CD14-positive monocyte (primary cell): ENCODE measurements at regions of chr1 and their contacts with region 1.

Region 1: DNA sequence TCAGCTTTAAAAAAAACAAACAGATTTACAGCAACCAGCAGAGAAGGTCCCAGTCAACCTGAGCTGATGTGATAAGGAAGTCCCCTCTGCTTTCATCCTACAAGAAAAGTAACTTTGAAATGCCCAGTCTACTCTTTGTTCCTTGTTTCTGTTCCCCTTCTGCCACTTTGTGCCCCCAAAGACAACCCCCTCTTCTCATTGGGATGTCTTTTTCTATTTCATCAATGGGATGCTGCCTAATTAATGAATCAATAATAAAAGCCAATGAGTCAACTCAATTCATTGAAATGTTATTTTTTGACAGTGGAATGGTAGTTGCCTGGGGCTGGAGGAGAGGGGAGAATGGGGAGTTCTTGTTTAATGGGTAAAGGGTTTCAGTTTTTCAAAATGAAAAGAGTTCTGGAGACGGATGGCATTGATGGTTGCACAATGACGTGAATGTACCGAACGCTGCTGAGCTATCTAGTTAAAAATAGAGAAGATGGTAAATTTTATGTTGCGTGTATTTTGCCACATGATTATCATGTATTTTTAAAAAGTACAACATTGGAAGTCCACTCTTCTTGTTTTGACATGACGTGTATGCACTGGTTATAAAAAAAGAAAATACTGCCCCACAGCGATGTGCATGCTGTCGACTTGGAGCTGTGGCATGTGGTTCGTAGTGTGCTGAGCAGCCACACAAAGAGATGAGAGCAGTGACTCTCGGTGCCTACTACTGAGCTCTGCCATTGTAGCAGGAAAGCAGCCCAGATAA is 22.4 kb upstream of the PADI2 start:
- DNase-seq: peak; percentile 69 to 93 (median 76)
- H3K4me3 ChIP-seq: peak overlapping the region in 1 of 3 experiments; percentile 45
- H3K4me3 Mint-ChIP-seq: peak overlapping the region; percentile 54 to 80
- H3K27ac ChIP-seq: peak overlapping the region; percentile 84 to 89
- H3K27ac Mint-ChIP-seq: peak overlapping the region; percentile 94 to 98 (median 96)
- H3K4me1 ChIP-seq: peaks cover 27 to 30% of the 10 kb centered on the region in 2 donors
- H3K4me1 Mint-ChIP-seq: peaks cover 34% of the 10 kb centered on the region
- H3K27me3 ChIP-seq: no peaks in the 10 kb centered on the region
- H3K27me3 Mint-ChIP-seq: peaks cover 0 to 1% (median 1%) of the 10 kb centered on the region in 3 donors
- CTCF ChIP-seq: no peak

Region 2: GRCh38 chr1:17080880-17081279 is 60.7 kb before region 1 on chr1:
- intact Hi-C with region 1: no loop called
- DNase-seq: no peak
- H3K4me3 ChIP-seq: no peak overlapping the region
- H3K4me3 Mint-ChIP-seq: no peak overlapping the region
- H3K27ac ChIP-seq: peak overlapping the region in 1 of 2 donors; percentile 69
- H3K27ac Mint-ChIP-seq: peak overlapping the region in 3 of 7 donors; percentile 63 to 90 (median 85)
- H3K4me1 ChIP-seq: peaks cover 26 to 29% of the 10 kb centered on the region in 2 donors
- H3K4me1 Mint-ChIP-seq: peaks cover 60% of the 10 kb centered on the region
- H3K27me3 ChIP-seq: no peaks in the 10 kb centered on the region
- H3K27me3 Mint-ChIP-seq: peaks cover 0 to 6% (median 1%) of the 10 kb centered on the region in 3 donors
- CTCF ChIP-seq: no peak

Region 3: DNA sequence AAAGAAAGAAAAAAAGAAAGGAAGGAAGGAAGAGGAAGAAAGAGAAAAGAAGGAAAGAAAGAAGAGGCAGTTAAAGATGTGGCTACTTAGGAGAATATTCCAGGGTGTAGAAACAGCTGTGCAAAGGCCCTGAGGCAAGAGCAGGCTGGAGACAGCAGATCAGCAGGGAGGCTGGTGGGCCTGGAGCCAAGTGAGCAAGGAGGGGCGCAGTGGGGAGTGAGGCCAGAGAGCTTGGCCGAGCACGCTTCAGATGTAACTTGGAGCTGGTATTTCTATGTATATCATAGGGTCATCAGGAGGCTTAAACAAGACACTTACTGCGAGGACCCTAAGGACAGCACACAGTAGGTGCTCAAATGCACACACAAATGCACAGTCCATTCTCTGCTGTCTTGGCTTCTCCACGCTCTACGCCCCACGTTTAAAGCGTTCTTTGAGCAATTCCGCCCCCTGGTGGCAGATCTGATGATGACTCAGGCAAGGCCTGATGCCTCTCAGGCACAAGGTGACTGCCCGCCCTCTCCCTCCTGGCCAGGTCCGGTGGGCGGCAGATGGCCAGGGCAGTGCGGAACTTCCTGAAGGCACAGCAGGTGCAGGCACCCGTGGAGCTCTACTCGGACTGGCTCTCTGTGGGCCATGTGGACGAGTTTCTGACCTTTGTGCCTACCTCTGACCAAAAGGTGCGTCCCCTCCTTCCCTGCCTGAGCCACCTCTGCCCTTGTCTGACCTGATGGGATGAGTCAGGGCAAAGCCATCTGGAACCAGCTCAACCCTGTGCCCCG is 95.4 kb after region 1 on chr1:
- intact Hi-C with region 1: loop called in 1 of 2 experiments (anchors 5 kb)
- DNase-seq: peak; percentile 81 to 86 (median 85)
- H3K4me3 ChIP-seq: no peak overlapping the region
- H3K4me3 Mint-ChIP-seq: no peak overlapping the region
- H3K27ac ChIP-seq: no peak overlapping the region
- H3K27ac Mint-ChIP-seq: peak overlapping the region in 3 of 7 donors; percentile 41 to 63 (median 55)
- H3K4me1 ChIP-seq: peaks cover 12% of the 10 kb centered on the region in 2 donors
- H3K4me1 Mint-ChIP-seq: peaks cover 22% of the 10 kb centered on the region
- H3K27me3 ChIP-seq: no peaks in the 10 kb centered on the region
- H3K27me3 Mint-ChIP-seq: peaks cover 0 to 5% (median 5%) of the 10 kb centered on the region in 3 donors
- CTCF ChIP-seq: peak; percentile 93

Region 4: DNA sequence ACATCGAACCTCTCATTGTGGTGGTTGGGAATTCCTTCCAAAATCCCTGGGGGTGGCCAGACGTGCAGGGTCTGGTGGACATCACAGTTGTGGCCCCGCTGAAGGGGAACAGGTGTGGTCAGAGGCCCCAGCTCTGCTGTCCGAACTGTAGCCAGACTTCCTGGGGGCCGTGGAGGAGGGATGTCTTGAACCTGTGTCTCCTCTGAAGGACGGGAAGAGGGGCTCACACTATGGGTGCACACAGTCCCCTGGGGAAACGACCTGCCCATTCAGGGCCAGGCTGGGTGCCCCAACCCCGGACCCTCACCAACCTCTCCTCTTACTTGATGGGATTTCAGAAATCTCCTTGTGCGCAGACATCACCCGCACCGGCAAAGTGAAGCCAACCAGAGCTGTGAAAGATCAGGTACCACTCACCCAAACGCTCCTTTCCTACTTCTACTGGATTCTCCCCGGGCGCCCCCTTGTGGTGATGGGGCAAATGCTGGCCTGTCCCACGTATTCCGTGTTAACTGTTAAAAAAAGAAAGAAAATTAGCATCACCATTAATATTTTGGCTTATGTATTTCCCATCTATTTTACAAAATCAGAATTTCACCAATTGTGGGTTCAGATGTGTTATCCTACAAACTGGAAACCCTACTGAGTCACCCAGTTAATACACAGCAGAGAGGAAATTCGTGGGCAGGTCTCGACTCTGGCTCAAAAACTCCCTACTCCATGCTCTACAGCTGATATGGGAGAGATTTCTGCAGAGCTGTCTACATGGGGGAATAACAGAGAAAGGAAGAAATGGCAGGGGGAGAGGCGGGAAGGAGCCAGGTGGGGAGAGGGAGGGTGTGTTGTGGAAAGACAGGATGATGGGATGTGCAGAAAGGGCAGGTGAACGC is 194.4 kb after region 1 on chr1:
- intact Hi-C with region 1: no loop called
- DNase-seq: peak; percentile 47 to 60 (median 58)
- H3K4me3 ChIP-seq: no peak overlapping the region
- H3K4me3 Mint-ChIP-seq: no peak overlapping the region
- H3K27ac ChIP-seq: no peak overlapping the region
- H3K27ac Mint-ChIP-seq: peak overlapping the region in 3 of 7 donors; percentile 26 to 60 (median 56)
- H3K4me1 ChIP-seq: no peaks in the 10 kb centered on the region
- H3K4me1 Mint-ChIP-seq: peaks cover 1% of the 10 kb centered on the region
- H3K27me3 ChIP-seq: no peaks in the 10 kb centered on the region
- H3K27me3 Mint-ChIP-seq: peaks cover 0 to 2% (median 1%) of the 10 kb centered on the region in 3 donors
- CTCF ChIP-seq: peak; percentile 90